Activated T-helper 2 cell treated with anti-CD3 and anti-CD28 coated beads, Interferon-gamma antibody, Interleukin-2, Interleukin-4, amounts not matched to agents 10 μg/mL and 5 μg/mL and 100 μg/mL, durations not matched to agents 14 hours and 24 hours and 36 hours (primary cell): ENCODE measurements at regions of chr2 and their contacts with region 1.

Region 1: GRCh38 chr2:144414324-144414845 is 105.5 kb downstream of the ZEB2 start:
- DNase-seq: no peak
- H3K4me3 Mint-ChIP-seq: no peak overlapping the region
- H3K27ac Mint-ChIP-seq: peak overlapping the region; percentile 81
- H3K4me1 Mint-ChIP-seq: peaks cover 24% of the 10 kb centered on the region
- H3K27me3 Mint-ChIP-seq: no peaks in the 10 kb centered on the region

Region 2: DNA sequence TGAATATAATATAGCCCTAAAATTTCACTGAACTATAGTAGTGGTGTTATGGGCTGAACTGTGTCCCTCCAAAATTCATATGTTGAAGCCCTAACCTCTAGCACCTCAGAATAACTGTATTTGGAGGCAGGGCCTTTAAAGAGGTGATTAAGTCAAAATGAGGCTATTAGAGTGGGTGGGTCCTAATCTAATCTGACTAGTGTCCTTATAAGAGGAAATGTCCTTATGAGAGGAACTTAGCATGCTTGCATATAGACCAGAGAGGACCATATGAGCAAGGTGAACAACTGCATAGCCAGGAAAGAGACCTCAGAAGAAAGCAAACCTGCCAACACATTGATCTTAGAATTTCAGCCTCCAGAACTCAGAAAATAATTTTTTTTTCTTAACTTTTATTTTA is 132.9 kb before region 1 on chr2:
- intact Hi-C with region 1: loop called (anchors 2 kb)
- DNase-seq: no peak
- H3K4me3 Mint-ChIP-seq: no peak overlapping the region
- H3K27ac Mint-ChIP-seq: no peak overlapping the region
- H3K4me1 Mint-ChIP-seq: peaks cover 46% of the 10 kb centered on the region
- H3K27me3 Mint-ChIP-seq: no peaks in the 10 kb centered on the region

Region 3: DNA sequence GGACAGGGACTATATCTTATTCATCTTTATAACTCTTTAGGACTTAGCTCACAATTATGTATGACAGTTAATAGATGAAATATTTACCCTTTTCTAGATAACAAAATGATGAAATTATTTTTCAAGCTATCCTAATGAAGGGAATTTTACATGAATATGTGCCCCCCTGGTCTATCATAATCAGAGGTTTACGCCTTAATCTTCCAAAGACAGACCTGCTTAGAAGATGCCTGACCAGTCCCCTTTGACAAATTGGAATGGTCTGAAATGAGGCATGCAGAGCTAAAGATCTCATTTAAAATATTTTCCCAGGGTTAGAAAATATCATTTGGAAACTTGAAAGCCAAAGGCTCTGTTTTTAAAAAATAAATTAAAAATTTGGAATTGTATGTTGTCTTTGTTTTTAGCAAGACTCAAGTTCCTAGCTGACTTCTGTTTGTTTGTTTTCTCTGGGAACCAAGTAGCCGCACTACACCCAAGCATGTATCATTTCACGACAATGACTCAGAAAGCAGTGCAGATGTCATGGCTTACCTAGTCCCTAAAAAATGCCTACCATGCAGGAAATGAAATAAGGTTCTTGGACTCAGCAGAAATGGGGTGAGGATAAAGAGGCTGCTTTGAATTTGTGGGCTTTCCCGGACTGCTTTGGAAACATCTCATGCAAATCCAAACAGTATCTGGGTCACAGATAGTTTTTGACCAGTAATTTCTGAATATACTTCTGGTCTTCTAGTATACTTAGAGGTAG is 56.6 kb before region 1 on chr2:
- intact Hi-C with region 1: loop called (anchors 1 kb)
- DNase-seq: no peak
- H3K4me3 Mint-ChIP-seq: no peak overlapping the region
- H3K27ac Mint-ChIP-seq: peak overlapping the region; percentile 56
- H3K4me1 Mint-ChIP-seq: peaks cover 35% of the 10 kb centered on the region
- H3K27me3 Mint-ChIP-seq: no peaks in the 10 kb centered on the region

Region 4: GRCh38 chr2:144382849-144383248 is 31.5 kb before region 1 on chr2:
- intact Hi-C with region 1: loop called (anchors 1 kb)
- DNase-seq: no peak
- H3K4me3 Mint-ChIP-seq: no peak overlapping the region
- H3K27ac Mint-ChIP-seq: peak overlapping the region; percentile 39
- H3K4me1 Mint-ChIP-seq: peaks cover 51% of the 10 kb centered on the region
- H3K27me3 Mint-ChIP-seq: peaks cover 2% of the 10 kb centered on the region

Region 5: DNA sequence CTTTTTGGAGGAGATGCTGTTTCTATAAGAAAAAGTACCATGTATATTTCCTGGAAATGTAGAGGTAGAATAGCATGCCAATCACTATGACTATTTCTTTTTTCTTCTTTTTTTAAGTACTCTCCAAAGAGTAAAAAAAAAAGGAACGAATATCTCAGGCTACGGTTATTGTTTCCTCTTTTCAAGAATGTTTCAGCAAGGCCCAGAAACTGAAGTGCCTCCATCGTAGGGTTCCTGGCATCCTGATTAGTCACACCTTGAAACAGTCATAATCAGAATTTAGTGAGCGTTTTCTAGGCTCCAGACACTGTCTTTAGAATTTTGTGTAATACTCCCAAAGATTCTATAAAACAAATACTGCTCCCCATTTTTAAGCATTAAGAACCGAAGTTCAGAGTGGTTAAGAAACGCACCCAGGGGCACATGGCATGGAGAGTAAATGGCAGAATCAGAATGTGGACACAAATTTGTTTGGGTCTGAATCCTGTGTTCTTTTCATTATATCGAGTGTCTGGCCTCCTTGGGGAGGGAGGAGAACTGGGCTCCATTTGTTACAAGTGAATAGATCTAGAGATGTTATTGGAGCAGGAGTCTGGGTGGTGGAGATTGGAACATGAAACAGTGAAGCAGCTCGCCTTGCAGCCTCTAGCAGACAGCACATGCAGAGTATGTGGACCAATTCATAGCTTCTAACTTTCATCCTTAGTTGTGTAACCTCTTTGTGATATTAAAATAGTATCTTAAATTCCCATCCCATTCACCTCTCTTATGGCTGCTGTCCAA is 78.8 kb after region 1 on chr2:
- intact Hi-C with region 1: no loop called
- DNase-seq: no peak
- H3K4me3 Mint-ChIP-seq: no peak overlapping the region
- H3K27ac Mint-ChIP-seq: peak overlapping the region; percentile 55
- H3K4me1 Mint-ChIP-seq: peaks cover 33% of the 10 kb centered on the region
- H3K27me3 Mint-ChIP-seq: no peaks in the 10 kb centered on the region